MCF 10A (cell line): ENCODE measurements at regions of chr5 and their contacts with region 1.

Region 1: DNA sequence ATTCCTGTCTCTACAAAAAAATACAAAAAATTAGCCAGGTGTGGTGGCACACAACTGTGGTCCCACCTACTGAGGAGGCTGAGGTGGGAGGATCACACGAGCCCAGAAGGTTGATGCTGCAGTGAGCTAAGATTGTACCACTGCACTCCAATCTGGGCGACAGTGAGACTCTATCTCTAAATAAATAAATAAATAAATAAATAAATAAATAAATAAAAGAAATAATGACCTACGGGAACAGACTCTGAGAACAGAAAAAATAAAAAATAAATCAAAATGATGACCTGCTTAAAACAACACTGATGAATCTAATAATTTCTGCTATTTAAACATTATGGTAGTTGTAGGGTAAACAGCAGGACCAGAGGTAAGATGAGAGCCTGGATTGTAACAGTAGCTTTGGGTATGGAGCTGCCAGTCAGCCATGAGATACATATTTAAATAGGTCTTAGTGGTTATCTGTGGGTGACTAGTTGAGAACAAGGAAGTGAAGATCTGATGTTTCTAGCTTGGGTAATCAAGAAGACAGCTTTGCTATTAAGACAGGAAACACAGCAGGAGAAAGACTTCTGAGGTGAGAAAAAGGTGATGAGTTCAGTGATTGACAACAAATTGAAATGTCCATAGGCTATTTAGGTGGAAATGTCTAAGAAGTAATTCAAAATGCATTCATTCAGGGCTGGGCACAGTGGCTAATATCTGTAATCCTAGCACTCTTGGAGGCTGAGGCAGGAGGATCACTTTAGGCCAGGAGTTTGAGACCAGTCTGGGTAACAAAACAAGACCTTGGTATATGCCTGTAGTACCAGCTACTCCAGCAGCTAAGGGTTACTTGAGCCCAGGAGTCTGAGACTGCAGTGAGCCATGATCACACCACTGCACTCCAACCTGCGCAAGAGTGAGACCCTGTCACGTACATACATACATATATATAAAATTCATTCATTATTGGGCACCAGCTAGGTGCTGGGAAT is 11.0 kb downstream of the RNF145 start:
- DNase-seq: no peak
- H3K4me3 Mint-ChIP-seq: no peak overlapping the region
- H3K27ac Mint-ChIP-seq: no peak overlapping the region
- H3K4me1 Mint-ChIP-seq: peaks cover 61% of the 10 kb centered on the region
- H3K27me3 Mint-ChIP-seq: no peaks in the 10 kb centered on the region
- CTCF ChIP-seq: no peak

Region 2: DNA sequence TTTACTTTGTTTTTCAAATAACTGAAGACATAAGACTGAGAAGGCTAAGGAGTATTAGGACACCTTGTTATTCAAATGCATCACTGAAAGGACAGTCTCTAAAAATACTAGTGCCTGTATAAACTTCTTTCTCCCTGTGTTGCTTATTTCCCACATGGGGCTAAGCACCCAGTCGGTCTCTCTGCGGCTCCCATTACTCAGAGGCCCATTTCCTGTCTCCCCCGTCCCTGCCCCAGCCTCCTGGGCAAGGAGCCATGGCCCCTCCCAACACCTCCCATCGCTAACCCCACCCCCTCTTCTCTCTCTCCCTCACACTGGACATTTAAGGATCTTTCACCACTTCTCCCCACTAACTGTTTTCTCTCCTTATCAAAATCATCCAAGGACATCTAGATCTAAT is 180.6 kb before region 1 on chr5:
- CTCF ChIA-PET with region 1: no interaction called
- POLR2A ChIA-PET with region 1: no interaction called
- intact Hi-C with region 1: no loop called
- DNase-seq: peak; percentile 95
- H3K4me3 Mint-ChIP-seq: no peak overlapping the region
- H3K27ac Mint-ChIP-seq: peak overlapping the region; percentile 0
- H3K4me1 Mint-ChIP-seq: peaks cover 22% of the 10 kb centered on the region
- H3K27me3 Mint-ChIP-seq: no peaks in the 10 kb centered on the region
- CTCF ChIP-seq: no peak

Region 3: DNA sequence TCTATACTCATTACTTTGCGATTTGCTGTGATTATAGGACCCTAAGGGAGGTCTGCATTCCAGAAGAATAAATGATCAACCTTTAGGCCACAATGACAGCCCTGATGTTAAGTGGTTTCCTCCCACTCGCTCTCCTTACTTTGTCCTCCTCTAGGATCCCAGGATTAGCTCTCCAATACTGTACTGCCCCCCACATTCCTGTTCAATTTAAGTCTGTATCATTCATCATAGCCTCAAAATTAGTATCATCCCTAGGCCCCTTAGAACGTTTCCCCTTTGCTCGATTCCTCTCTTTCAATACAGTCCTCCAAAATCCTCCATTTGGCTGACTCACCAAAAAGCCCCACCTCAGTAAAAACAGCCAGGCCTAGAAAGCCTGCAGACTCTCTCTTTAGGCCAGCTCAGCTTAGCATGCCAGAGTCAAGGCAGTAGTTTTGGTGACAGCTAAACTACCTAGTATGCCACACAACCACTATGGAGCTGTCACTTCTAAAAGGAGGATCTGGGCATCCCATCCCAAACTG is 13.4 kb before region 1 on chr5:
- CTCF ChIA-PET with region 1: interaction called, 12 read pairs
- POLR2A ChIA-PET with region 1: interaction called, 650 read pairs
- intact Hi-C with region 1: no loop called
- DNase-seq: peak; percentile 77
- H3K4me3 Mint-ChIP-seq: peak overlapping the region; percentile 48
- H3K27ac Mint-ChIP-seq: peak overlapping the region; percentile 96
- H3K4me1 Mint-ChIP-seq: peaks cover 81% of the 10 kb centered on the region
- H3K27me3 Mint-ChIP-seq: no peaks in the 10 kb centered on the region
- CTCF ChIP-seq: no peak

Region 4: GRCh38 chr5:159459951-159460538 is 261.7 kb after region 1 on chr5:
- CTCF ChIA-PET with region 1: no interaction called
- POLR2A ChIA-PET with region 1: no interaction called
- intact Hi-C with region 1: no loop called
- DNase-seq: peak; percentile 32
- H3K4me3 Mint-ChIP-seq: no peak overlapping the region
- H3K27ac Mint-ChIP-seq: no peak overlapping the region
- H3K4me1 Mint-ChIP-seq: peaks cover 17% of the 10 kb centered on the region
- H3K27me3 Mint-ChIP-seq: no peaks in the 10 kb centered on the region
- CTCF ChIP-seq: no peak

Region 5: DNA sequence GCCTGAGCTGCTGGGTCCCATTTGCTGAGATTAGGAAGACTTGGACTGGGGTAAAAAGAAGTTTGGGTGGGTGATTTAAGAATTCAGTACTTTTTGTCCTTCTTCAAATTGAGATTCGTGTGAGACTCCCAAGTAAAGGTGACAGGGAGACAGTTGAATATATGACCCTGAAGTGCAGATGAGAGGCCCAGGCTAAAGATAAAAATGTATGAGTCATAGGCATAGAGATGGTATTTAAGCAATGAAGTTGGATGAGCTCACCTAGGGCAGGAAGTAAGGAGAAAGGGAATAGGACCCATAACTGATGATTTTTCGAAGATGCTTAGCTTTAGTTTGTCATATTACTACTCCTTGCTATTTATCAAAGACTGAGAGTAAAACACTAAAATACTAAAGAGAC is 462.1 kb after region 1 on chr5:
- CTCF ChIA-PET with region 1: no interaction called
- POLR2A ChIA-PET with region 1: no interaction called
- intact Hi-C with region 1: no loop called
- DNase-seq: peak; percentile 53
- H3K4me3 Mint-ChIP-seq: no peak overlapping the region
- H3K27ac Mint-ChIP-seq: no peak overlapping the region
- H3K4me1 Mint-ChIP-seq: peaks cover 12% of the 10 kb centered on the region
- H3K27me3 Mint-ChIP-seq: no peaks in the 10 kb centered on the region
- CTCF ChIP-seq: no peak

Region 6: DNA sequence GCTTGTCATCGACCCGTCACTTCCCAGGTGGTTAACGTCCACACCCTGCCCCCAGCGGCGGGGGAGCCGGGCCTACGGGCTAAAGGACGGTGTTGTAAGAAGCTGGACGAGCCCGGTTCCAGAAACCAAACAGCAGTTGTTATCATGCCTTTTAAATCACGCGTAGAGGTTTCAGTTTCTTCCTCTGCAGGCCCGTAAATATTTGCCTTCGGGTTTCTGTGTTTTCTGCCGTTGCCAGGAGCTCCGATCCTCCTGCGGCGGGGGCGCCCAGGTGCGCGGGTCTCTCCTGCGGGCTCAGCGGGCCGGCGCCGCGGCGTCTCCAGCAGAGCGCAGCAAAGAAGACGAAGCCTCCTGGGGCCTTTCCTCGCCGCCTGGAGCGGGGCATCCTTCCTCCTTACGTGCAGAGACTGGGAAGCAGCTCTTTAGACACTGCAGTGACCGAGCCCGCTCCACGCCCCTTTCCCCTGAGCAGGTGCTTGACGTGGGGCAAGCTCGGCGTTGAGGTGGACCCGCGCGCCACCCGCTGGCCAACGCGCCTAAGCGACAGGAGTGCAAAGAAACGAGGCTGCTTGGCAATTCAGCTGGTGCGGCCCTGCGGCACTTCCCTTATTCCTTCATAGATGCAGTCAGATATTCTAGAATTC is 788.8 kb after region 1 on chr5:
- CTCF ChIA-PET with region 1: no interaction called
- POLR2A ChIA-PET with region 1: no interaction called
- intact Hi-C with region 1: no loop called
- DNase-seq: peak; percentile 85
- H3K4me3 Mint-ChIP-seq: peak overlapping the region; percentile 13
- H3K27ac Mint-ChIP-seq: no peak overlapping the region
- H3K4me1 Mint-ChIP-seq: peaks cover 12% of the 10 kb centered on the region
- H3K27me3 Mint-ChIP-seq: no peaks in the 10 kb centered on the region
- CTCF ChIP-seq: peak; percentile 98